ENCODE measurements at regions of chr6 and their contacts with region 1.

Region 1: DNA sequence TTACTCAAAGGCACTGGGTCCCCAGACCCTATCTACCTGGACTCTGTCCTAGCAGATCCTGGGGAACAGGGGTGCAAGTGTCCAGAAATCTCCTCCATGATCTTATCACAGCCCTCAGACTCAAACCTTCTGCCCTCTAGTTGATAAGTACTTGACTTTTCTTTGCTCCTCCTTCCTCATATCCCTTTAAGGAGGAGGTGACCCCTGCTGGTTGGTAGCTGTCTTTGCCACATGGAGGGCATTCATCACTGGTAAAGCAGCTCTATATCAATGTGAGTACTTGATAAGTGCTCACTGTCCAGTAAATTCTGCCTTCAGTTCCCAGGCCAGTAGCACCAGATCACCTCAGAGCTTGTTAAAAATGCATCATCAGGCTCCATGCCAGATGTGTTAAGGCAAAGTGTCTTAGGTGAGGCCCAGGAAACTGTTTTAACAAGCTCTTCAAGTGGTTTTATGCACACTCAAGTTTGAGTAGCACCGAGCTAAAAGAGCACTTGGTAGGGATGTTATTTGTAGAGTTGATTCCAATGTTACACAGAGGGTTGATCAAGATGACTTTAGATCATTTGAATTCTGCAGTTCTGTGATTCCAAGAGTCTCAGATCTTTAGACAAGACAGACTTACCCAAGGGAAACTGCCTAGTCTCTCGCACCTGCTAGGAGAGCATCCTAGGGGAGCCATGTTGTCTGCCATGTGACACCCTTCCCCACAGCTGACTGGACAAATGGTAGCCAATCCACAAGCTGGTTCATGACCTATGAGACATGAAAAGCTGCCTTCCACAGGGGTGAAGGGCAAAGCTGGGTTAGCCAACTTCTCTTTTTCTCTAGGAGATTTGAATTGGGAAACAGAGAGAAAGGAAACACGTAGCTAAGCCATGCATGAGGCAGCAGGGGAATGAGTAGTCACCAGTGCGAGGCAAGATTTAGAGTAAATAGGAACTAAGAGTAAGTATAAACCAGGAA is 18.6 kb downstream of the TREML2 start:
- DNase-seq: peak; percentile 74
- H3K4me3 Mint-ChIP-seq: no peak overlapping the region
- H3K27ac Mint-ChIP-seq: no peak overlapping the region
- H3K4me1 Mint-ChIP-seq: peaks cover 24% of the 10 kb centered on the region
- H3K27me3 Mint-ChIP-seq: no peaks in the 10 kb centered on the region

Region 2: GRCh38 chr6:41092421-41093140 is 89.8 kb before region 1 on chr6:
- CTCF ChIA-PET with region 1: interaction called, 13 read pairs
- intact Hi-C with region 1: loop called (anchors 1 kb)
- DNase-seq: no peak
- H3K4me3 Mint-ChIP-seq: no peak overlapping the region
- H3K27ac Mint-ChIP-seq: no peak overlapping the region
- H3K4me1 Mint-ChIP-seq: no peaks in the 10 kb centered on the region
- H3K27me3 Mint-ChIP-seq: no peaks in the 10 kb centered on the region

Region 3: DNA sequence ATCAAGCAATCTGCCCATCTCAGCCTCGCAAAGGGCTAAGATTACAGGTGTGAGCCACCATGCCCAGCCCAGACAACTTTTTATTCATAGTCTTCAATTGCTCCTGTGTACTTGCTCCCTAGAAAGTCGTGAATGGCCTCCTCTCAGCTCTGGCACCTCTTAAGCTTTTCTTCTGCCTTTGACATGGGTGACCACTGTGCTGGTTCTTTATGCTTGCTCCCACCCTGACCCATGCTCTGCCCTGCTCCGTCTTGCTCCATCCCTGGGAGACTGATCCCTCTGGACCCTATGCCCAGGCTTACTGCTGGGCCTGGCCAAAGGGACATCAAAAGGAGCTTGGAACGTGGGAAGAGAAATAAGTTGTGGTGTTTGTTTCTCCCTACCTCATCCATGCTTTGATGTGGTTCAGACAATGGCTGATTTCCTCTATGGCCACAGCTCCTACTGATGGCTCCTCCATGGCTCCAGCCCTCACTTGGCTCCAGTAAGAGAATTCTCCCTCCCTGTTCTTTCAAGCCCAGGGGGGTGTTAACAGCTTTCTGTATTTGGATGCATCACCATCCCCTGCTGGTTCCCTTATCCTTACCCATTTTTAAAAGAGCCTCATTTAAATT is 11.7 kb before region 1 on chr6:
- CTCF ChIA-PET with region 1: interaction called, 11 read pairs
- intact Hi-C with region 1: no loop called
- DNase-seq: no peak
- H3K4me3 Mint-ChIP-seq: no peak overlapping the region
- H3K27ac Mint-ChIP-seq: no peak overlapping the region
- H3K4me1 Mint-ChIP-seq: peaks cover 3% of the 10 kb centered on the region
- H3K27me3 Mint-ChIP-seq: no peaks in the 10 kb centered on the region

Measured in activated naive CD4-positive, alpha-beta T cell treated with anti-CD3 and anti-CD28 coated beads for 36 hours (primary cell).